ENCODE measurements at regions of chr15 and their contacts with region 1.

Region 1: GRCh38 chr15:74382004-74382816 is 14.8 kb upstream of the CYP11A1 start:
- DNase-seq: peak; percentile 87
- H3K4me3 ChIP-seq: no peak overlapping the region
- H3K27ac ChIP-seq: no peak overlapping the region
- H3K4me1 ChIP-seq: peaks cover 0 to 10% (median 0%) of the 10 kb centered on the region in 4 donors
- H3K27me3 ChIP-seq: no peaks in the 10 kb centered on the region
- CTCF ChIP-seq: peak; percentile 79 to 94 (median 89)
- EP300 ChIP-seq: no peak
- POLR2A ChIP-seq: no peak

Region 2: GRCh38 chr15:74134387-74135027 is 247.7 kb before region 1 on chr15:
- in situ Hi-C with region 1: no loop called
- intact Hi-C with region 1: no loop called
- DNase-seq: peak; percentile 38
- H3K4me3 ChIP-seq: no peak overlapping the region
- H3K27ac ChIP-seq: no peak overlapping the region
- H3K4me1 ChIP-seq: peaks cover 5 to 38% (median 18%) of the 10 kb centered on the region in 4 donors
- H3K27me3 ChIP-seq: peaks cover 99% of the 10 kb centered on the region
- CTCF ChIP-seq: peak; percentile 21 to 41 (median 28)
- EP300 ChIP-seq: no peak
- POLR2A ChIP-seq: no peak

Region 3: GRCh38 chr15:74438721-74439316 is 56.6 kb after region 1 on chr15:
- in situ Hi-C with region 1: loop called in 3 of 4 experiments (anchors 5 kb)
- intact Hi-C with region 1: loop called (anchors 5 kb)
- DNase-seq: peak; percentile 68
- H3K4me3 ChIP-seq: no peak overlapping the region
- H3K27ac ChIP-seq: no peak overlapping the region
- H3K4me1 ChIP-seq: peaks cover 0 to 6% (median 2%) of the 10 kb centered on the region in 4 donors
- H3K27me3 ChIP-seq: peaks cover 4% of the 10 kb centered on the region
- CTCF ChIP-seq: peak; percentile 82 to 89 (median 86)
- EP300 ChIP-seq: no peak
- POLR2A ChIP-seq: no peak

Region 4: GRCh38 chr15:74620636-74621545 is 238.7 kb after region 1 on chr15:
- in situ Hi-C with region 1: no loop called
- intact Hi-C with region 1: loop called (anchors 10 kb)
- DNase-seq: peak; percentile 78
- H3K4me3 ChIP-seq: no peak overlapping the region
- H3K27ac ChIP-seq: no peak overlapping the region
- H3K4me1 ChIP-seq: peaks cover 24 to 30% (median 26%) of the 10 kb centered on the region in 4 donors
- H3K27me3 ChIP-seq: no peaks in the 10 kb centered on the region
- CTCF ChIP-seq: peak; percentile 64 to 93 (median 80)
- EP300 ChIP-seq: no peak
- POLR2A ChIP-seq: no peak